HepG2 (cell line): ENCODE measurements at regions of chr20 and their contacts with region 1.

Region 1: DNA sequence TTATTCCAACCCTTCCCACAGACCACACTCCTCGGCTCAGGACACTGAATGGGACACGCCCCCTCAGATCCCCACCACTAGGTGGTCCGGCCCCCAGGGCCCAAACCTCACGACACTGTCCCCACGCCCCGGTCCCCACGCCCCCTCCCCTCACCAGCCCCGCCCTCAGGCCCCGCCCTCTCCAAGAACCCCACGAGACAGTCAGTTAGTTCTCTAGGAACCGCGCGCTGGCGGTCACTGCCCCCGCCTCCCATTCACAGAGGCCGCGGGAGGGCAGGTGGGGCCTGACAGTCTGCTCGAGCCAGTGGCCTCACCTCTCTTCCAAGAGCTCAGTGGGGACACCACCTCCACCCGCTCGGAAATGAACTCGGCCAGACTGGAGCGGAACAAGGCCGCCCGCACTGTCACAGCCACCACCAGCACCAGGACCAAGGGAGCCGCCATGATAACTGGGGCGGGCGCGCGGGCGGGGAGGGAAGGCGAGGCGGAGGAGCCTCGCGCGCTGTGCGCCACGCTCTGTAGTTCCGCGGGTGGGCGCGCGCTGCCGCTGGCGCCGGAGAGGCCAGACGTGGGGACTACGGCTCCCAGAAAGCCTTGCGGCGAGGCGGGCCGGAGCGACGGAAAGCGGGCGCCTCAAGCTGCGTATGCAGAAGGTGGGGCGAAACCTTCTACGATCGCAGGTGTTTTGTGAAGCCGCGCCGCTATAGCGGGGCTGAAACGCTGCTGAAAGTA is at the start of gene PIGU:
- DNase-seq: peak; percentile 95
- ATAC-seq: peak; percentile 97
- H3K4me3 ChIP-seq: peak within 1 kb of the TSS; percentile 87 to 96 (median 89)
- H3K27ac ChIP-seq: peak within 1 kb of the TSS; percentile 86
- H3K4me1 ChIP-seq: peaks cover 29% of the 10 kb centered on the region
- H3K27me3 ChIP-seq: peaks cover 0 to 4% of the 10 kb centered on the region in 2 experiments; a peak in 1 of 5 replicates
- CTCF ChIP-seq: peak; percentile 59; the same call in 1 of the 2 replicates
- EP300 ChIP-seq: peak in 1 of 2 experiments; percentile 61; a peak in 1 of 4 replicates
- POLR2A ChIP-seq: peak; percentile 88 to 91
- RAD21 ChIP-seq: peak; percentile 61
- total RNA-seq, gene PIGU: 27.1 and 45.5 TPM in 2 replicates

Region 2: DNA sequence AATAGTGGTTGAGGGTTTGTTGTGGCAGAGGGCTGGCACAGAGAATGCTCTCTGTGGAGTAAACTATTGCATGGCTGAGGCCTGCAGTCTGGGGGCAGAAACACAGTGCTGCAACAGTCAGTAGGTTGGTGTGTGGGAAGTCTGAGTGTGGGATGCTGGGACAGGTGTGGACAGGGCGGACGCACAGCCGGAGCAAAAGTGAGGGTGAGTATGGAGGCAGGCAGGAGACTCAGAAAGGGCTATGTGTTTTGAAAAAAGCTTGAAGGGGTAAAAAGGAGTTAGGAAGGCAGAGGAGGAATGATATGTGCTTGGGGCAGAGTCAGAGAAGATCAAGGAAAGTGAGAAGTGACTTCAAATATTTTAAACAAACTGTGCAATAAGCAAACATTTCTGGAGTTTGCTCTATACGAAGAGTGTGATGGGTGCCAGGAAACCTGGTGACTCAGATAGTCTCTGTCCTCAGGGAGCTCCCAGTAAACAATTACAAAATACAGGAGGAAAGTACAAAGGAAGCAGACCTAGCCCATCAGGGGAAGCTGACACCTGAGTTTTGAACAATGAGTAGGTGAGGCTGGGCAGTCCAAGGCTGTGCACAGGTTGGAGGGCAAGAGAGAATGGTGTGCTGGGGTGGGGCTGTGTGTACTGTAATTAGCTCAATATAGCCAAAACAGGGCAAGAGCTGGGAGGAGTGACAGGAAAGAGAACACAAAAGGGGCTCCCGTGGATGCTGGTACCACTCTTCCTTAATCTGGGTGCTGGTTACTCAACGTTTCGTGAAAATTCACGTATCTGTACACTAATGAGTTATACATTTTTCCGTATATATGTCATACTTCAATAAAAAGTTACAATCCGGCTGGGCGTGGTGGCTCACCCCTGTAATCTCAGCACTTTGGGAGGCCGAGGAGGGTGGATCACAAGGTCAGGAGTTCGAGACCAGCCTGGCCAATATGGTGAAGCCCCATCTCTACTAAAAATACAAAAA is 55.1 kb before region 1 on chr20:
- CTCF ChIA-PET with region 1: interaction called, 5 read pairs
- POLR2A ChIA-PET with region 1: interaction called, 22 read pairs
- in situ Hi-C with region 1: loop called (anchors 5 kb)
- intact Hi-C with region 1: loop called (anchors 1 kb)
- DNase-seq: peak; percentile 100
- ATAC-seq: peak; percentile 96
- H3K4me3 ChIP-seq: peak overlapping the region in 1 of 3 experiments; percentile 43; a peak in 2 of 6 replicates
- H3K27ac ChIP-seq: peak overlapping the region; percentile 89
- H3K4me1 ChIP-seq: peaks cover 65% of the 10 kb centered on the region
- H3K27me3 ChIP-seq: no peaks in the 10 kb centered on the region
- CTCF ChIP-seq: no peak; the same call in 1 of the 2 replicates
- EP300 ChIP-seq: peak; percentile 95 to 100
- POLR2A ChIP-seq: peak; percentile 22; a peak in 1 of 4 replicates
- RAD21 ChIP-seq: no peak; the same call in 1 of the 2 replicates

Region 3: DNA sequence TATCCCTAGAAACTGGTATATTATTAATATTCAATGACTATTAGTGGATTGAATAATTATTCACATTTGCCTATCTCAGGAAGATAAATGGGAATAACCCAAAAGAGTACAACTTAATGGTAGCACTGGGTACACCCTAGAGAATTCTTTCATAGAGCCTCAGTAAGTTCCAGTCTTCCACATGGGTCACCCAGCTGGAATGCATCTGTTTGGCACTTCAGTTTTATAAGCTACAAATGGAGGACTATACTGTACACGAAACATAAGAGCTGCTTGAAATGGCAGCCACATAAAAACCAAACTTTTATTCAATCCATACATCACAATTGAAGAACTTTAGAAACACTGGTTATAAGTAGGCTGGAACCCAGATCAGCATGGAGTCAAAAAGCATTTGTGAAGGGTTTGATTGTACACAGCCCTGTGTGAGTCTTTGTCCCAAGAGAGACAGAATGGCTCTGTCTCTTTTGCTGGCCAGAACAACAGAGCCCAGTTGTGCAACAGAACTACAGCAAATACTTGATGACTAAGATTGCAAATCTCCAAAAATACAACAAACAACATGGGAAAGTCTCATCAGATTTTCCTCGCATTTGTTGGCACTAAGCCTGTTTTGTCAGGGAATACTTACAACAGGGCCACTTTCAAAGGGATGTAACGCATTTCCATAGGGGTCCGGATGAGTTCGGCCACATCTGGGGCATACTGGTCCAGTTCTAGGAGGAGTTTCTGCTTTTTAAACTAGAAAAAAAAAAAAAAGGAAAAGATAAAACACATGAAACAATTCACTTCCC is 39.4 kb before region 1 on chr20:
- CTCF ChIA-PET with region 1: no interaction called
- POLR2A ChIA-PET with region 1: interaction called, 10 read pairs
- in situ Hi-C with region 1: no loop called
- intact Hi-C with region 1: no loop called
- DNase-seq: peak; percentile 90
- ATAC-seq: peak; percentile 85
- H3K4me3 ChIP-seq: no peak overlapping the region
- H3K27ac ChIP-seq: peak overlapping the region; percentile 54
- H3K4me1 ChIP-seq: peaks cover 57% of the 10 kb centered on the region
- H3K27me3 ChIP-seq: no peaks in the 10 kb centered on the region
- CTCF ChIP-seq: no peak
- EP300 ChIP-seq: peak; percentile 69 to 87; a peak in 3 of 4 replicates
- POLR2A ChIP-seq: no peak
- RAD21 ChIP-seq: no peak

Region 4: GRCh38 chr20:34663213-34663943 is 13.4 kb before region 1 on chr20:
- CTCF ChIA-PET with region 1: no interaction called
- POLR2A ChIA-PET with region 1: interaction called, 10 read pairs
- in situ Hi-C with region 1: no loop called
- intact Hi-C with region 1: no loop called
- DNase-seq: no peak
- ATAC-seq: no peak; the same call in 2 of the 3 replicates
- H3K4me3 ChIP-seq: no peak overlapping the region
- H3K27ac ChIP-seq: no peak overlapping the region
- H3K4me1 ChIP-seq: peaks cover 12% of the 10 kb centered on the region; the same call in 1 of the 2 replicates
- H3K27me3 ChIP-seq: no peaks in the 10 kb centered on the region
- CTCF ChIP-seq: no peak
- EP300 ChIP-seq: no peak
- POLR2A ChIP-seq: no peak
- RAD21 ChIP-seq: no peak

Region 5: DNA sequence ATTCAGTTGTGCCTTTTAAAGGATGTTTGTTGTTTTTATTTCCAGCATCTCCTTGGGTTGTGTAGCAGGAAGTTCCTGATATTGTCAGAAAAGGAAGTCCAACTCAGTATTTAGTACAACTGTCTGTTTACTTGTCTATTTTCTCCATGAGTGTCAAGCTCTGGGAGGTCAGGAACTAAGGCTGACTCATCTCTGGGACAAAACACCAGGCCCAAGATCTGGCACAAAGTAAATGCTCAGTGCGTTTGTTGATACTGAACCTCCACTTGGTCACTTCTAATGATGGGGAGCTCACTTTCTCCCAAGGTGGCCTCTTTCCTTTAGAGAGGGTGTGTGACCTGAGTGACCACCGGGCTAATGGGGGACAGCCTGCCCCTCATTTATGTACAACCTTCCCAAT is 12.7 kb after region 1 on chr20:
- CTCF ChIA-PET with region 1: no interaction called
- POLR2A ChIA-PET with region 1: interaction called, 18 read pairs
- in situ Hi-C with region 1: no loop called
- intact Hi-C with region 1: no loop called
- DNase-seq: no peak
- ATAC-seq: peak; percentile 30; the same call in 1 of the 3 replicates
- H3K4me3 ChIP-seq: no peak overlapping the region
- H3K27ac ChIP-seq: no peak overlapping the region
- H3K4me1 ChIP-seq: peaks cover 18% of the 10 kb centered on the region
- H3K27me3 ChIP-seq: no peaks in the 10 kb centered on the region
- CTCF ChIP-seq: no peak
- EP300 ChIP-seq: peak in 1 of 2 experiments; percentile 38; a peak in 1 of 4 replicates
- POLR2A ChIP-seq: no peak
- RAD21 ChIP-seq: no peak